Activated CD4-positive, alpha-beta T cell treated with anti-CD3 and anti-CD28 coated beads for 36 hours (primary cell): ENCODE measurements at regions of chr11 and their contacts with region 1.

Region 1: GRCh38 chr11:131522851-131523250 is 152.4 kb downstream of the NTM start:
- DNase-seq: no peak
- ATAC-seq: no peak
- H3K4me3 Mint-ChIP-seq: no peak overlapping the region
- H3K27ac Mint-ChIP-seq: no peak overlapping the region
- H3K4me1 Mint-ChIP-seq: no peaks in the 10 kb centered on the region
- H3K27me3 Mint-ChIP-seq: peaks cover 3% of the 10 kb centered on the region

Region 2: DNA sequence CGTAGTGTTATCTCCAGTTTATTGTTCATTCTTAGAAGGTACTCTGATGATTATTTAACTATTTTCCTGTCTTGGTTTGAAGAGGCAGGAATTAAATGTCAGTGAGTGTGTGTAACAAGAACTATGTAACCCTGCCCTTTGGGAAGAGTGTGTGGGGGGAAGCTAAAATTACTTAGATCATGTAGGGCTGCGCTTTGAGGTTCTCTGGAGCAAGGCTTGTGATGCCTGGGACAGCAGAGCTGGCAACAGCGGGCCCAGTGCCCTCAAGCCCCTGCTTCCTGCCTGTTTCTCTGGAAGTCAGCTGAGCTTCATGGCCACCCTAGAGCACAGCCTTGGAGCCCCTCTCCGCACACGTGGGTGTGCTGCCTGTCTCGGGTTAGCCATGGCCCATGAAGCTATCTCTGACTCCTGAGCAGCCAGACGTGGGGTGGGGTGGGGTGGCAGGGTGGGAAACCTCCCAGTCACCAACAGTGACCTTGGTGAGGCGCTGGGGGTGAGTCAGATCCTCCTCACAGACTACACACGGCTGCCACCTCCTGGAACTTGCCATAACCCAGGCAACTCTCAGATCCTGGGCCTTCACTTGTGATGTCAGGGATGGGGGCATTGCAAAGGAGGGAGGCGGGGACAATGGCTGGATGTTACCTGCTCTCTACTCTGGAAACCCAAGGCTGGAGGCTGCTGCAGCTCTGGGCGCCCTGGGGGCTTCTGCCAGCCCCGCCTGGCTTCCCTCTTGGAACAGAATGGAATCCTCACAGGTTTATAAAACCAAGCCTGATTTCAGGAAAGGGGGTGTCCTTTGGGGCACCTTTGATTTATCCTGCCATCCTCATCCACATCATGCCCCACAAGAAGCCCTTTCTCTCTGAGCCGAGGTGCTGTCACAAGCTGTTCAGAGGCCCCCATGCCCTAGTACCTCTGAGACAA is 695.1 kb before region 1 on chr11:
- CTCF ChIA-PET with region 1: no interaction called
- POLR2A ChIA-PET with region 1: no interaction called
- intact Hi-C with region 1: loop called in 1 of 2 experiments (anchors 10 kb)
- DNase-seq: peak; percentile 54
- ATAC-seq: peak; percentile 87
- H3K4me3 Mint-ChIP-seq: no peak overlapping the region
- H3K27ac Mint-ChIP-seq: no peak overlapping the region
- H3K4me1 Mint-ChIP-seq: no peaks in the 10 kb centered on the region
- H3K27me3 Mint-ChIP-seq: peaks cover 3% of the 10 kb centered on the region

Region 3: GRCh38 chr11:131534611-131535010 is 11.8 kb after region 1 on chr11:
- CTCF ChIA-PET with region 1: no interaction called
- POLR2A ChIA-PET with region 1: no interaction called
- intact Hi-C with region 1: no loop called
- DNase-seq: no peak
- ATAC-seq: no peak
- H3K4me3 Mint-ChIP-seq: no peak overlapping the region
- H3K27ac Mint-ChIP-seq: no peak overlapping the region
- H3K4me1 Mint-ChIP-seq: no peaks in the 10 kb centered on the region
- H3K27me3 Mint-ChIP-seq: no peaks in the 10 kb centered on the region